Endothelial cell of umbilical vein (primary cell): ENCODE measurements at regions of chr18 and their contacts with region 1.

Region 1: GRCh38 chr18:59402432-59403090 is 43.5 kb upstream of the LMAN1 start:
- DNase-seq: peak; percentile 73
- H3K4me3 ChIP-seq: no peak overlapping the region
- H3K27ac ChIP-seq: no peak overlapping the region
- H3K4me1 ChIP-seq: no peaks in the 10 kb centered on the region
- H3K27me3 ChIP-seq: peaks cover 0 to 1% of the 10 kb centered on the region in 2 experiments
- CTCF ChIP-seq: peak; percentile 84 to 92
- POLR2A ChIP-seq: no peak

Region 2: GRCh38 chr18:59127047-59127446 is 275.5 kb before region 1 on chr18:
- CTCF ChIA-PET with region 1: no interaction called
- POLR2A ChIA-PET with region 1: no interaction called
- dilution Hi-C with region 1: no loop called
- intact Hi-C with region 1: no loop called
- DNase-seq: no peak
- H3K4me3 ChIP-seq: no peak overlapping the region
- H3K27ac ChIP-seq: no peak overlapping the region
- H3K4me1 ChIP-seq: no peaks in the 10 kb centered on the region
- H3K27me3 ChIP-seq: peaks cover 5 to 7% of the 10 kb centered on the region in 2 experiments
- CTCF ChIP-seq: no peak
- POLR2A ChIP-seq: no peak

Region 3: GRCh38 chr18:59249205-59249774 is 153.3 kb before region 1 on chr18:
- CTCF ChIA-PET with region 1: interaction called, 244 read pairs
- POLR2A ChIA-PET with region 1: no interaction called
- dilution Hi-C with region 1: no loop called
- intact Hi-C with region 1: loop called (anchors 2 kb)
- DNase-seq: peak; percentile 69
- H3K4me3 ChIP-seq: no peak overlapping the region
- H3K27ac ChIP-seq: no peak overlapping the region
- H3K4me1 ChIP-seq: no peaks in the 10 kb centered on the region
- H3K27me3 ChIP-seq: peaks cover 5 to 16% of the 10 kb centered on the region in 2 experiments
- CTCF ChIP-seq: peak; percentile 51 to 70
- POLR2A ChIP-seq: no peak

Region 4: DNA sequence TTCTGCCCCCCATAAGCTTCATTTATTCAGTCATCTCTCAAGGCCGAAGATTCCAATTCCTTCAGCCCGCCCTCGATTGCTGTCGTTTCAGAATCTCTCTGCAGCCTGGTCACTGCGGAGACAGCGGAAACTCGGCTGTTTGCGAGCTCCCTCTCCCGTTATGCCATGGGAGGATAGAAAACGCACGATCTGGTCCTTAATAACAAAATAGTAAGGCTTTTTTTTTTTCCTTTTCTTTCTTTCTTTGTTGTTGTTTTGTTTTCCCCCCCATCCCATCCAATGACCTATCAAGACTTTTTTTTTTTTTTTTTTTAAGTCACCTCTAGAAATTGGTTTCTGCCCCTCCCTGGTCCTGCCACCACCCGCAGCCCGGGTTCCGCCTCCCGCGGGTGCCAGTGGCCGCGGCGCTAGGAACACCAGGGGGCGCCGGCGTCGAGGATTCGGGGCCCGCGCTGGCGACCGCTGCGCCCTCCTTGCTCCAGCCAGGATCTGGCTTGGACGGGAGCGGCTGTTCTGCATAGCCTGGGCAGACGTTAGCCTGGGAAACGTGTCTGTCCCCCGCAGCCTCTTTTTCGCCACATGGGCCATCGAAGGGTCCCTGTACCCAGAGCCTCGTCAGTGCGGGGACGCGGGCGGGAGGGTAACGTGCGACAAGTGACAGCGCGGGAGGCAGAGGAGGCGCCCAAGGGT is 94.2 kb before region 1 on chr18:
- CTCF ChIA-PET with region 1: interaction called, 304 read pairs
- POLR2A ChIA-PET with region 1: no interaction called
- dilution Hi-C with region 1: no loop called
- intact Hi-C with region 1: loop called (anchors 2 kb)
- DNase-seq: peak; percentile 50
- H3K4me3 ChIP-seq: no peak overlapping the region
- H3K27ac ChIP-seq: no peak overlapping the region
- H3K4me1 ChIP-seq: peaks cover 3% of the 10 kb centered on the region
- H3K27me3 ChIP-seq: peaks cover 17 to 29% of the 10 kb centered on the region in 2 experiments
- CTCF ChIP-seq: peak; percentile 74 to 83
- POLR2A ChIP-seq: no peak

Region 5: GRCh38 chr18:59358712-59359575 is 43.6 kb before region 1 on chr18 and contains the start of gene LMAN1:
- CTCF ChIA-PET with region 1: interaction called, 13 read pairs
- POLR2A ChIA-PET with region 1: no interaction called
- dilution Hi-C with region 1: no loop called
- intact Hi-C with region 1: no loop called
- DNase-seq: peak; percentile 93
- H3K4me3 ChIP-seq: peak within 1 kb of the TSS; percentile 88 to 94 (median 89)
- H3K27ac ChIP-seq: peak within 1 kb of the TSS; percentile 73
- H3K4me1 ChIP-seq: peaks cover 18% of the 10 kb centered on the region
- H3K27me3 ChIP-seq: peaks cover 22 to 38% of the 10 kb centered on the region in 2 experiments
- CTCF ChIP-seq: no peak
- POLR2A ChIP-seq: peak; percentile 79
- total RNA-seq, gene LMAN1: 92.5 and 98.3 TPM in 2 replicates

Region 6: GRCh38 chr18:59414111-59414653 is 11.6 kb after region 1 on chr18:
- CTCF ChIA-PET with region 1: interaction called, 11 read pairs
- POLR2A ChIA-PET with region 1: no interaction called
- dilution Hi-C with region 1: no loop called
- intact Hi-C with region 1: no loop called
- DNase-seq: no peak
- H3K4me3 ChIP-seq: no peak overlapping the region
- H3K27ac ChIP-seq: no peak overlapping the region
- H3K4me1 ChIP-seq: no peaks in the 10 kb centered on the region
- H3K27me3 ChIP-seq: no peaks in the 10 kb centered on the region
- CTCF ChIP-seq: no peak
- POLR2A ChIP-seq: no peak